A549 (cell line): ENCODE measurements at regions of chr2 and their contacts with region 1.

Region 1: DNA sequence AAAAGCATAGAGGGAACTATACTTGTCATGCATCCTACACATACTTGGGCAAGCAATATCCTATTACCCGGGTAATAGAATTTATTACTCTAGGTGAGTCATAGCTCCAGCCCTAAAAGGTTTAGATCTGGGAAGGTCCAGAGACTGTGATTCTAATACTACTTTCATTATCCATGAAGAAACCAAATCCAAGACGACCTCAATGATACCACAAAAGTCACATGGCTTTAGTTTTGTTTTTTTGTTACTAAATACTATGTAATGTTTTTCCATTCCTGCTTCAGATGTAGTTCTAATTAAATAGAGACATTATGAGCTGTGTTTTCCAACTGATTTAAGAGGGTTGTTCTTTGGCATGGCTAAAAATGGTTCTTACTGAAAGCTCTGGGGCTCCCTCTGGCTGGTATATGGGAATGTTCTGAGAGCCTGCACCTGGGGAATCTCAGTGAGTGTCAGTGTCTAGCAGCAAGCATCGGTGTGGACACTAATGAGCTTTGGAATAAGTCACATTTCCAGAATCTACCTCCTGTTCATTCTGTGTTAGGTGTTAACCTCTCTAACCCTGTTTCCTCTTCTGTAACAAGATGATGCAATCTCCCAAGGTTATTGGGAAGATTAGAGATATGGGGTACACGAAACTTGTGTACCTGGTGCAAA is 20.5 kb upstream of the IL1RL2 start:
- DNase-seq: peak in 1 of 2 experiments; percentile 52
- ATAC-seq: peak; percentile 68 to 78; a peak in 4 of 6 replicates
- H3K4me3 ChIP-seq: no peak overlapping the region
- H3K27ac ChIP-seq: peak overlapping the region; percentile 8 to 49; a peak in 4 of 6 replicates
- H3K4me1 ChIP-seq: peaks cover 11% of the 10 kb centered on the region; the same call in 2 of the 3 replicates
- CTCF ChIP-seq: peak; percentile 66
- EP300 ChIP-seq: no peak
- POLR2A ChIP-seq: no peak
- RAD21 ChIP-seq: peak; percentile 80 to 83

Region 2: DNA sequence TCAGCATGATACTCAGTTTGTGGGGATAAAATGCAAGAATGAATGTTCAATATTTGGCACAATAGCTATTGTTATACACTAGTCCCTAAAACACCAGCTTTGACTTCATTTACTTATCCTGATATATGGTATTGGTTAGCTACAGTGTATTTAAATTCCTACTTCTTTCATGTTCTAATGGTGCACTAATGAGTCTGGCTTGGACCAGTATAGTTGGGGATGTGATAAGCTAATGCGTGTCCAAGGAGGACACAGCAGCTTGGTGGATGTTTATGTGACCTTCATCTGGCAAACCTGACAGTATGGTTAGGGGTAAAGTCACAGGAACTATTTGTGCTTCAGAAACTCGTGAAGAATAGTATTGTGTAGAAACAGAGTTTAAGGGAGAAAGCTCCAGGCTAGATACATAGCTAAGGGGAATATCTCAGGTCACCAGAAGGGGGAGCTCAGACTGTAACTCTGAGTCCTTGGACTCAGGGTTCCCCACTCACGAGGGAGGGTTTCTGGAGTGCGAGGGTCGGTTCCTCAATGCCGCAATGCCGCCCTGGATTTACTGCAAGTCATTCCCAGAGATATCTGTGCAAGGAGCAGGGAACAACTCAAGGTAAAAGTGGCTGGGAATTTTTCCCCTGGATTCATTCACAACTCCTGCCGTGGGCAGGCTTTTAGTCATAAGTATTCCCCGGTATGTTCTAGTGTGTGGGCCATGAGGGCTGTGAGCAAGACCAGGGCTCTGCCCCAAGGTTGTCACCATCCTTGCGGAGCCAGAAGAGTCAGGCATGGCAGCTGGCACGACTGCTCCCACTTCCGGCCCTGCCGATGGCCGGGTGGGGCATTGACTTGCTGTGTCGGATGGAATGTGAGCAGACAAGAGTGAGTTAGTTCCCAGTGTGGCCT is 160.1 kb before region 1 on chr2:
- CTCF ChIA-PET with region 1: interaction called, 13 read pairs
- POLR2A ChIA-PET with region 1: no interaction called
- DNase-seq: peak; percentile 43 to 52
- ATAC-seq: peak; percentile 86 to 98
- H3K4me3 ChIP-seq: no peak overlapping the region
- H3K27ac ChIP-seq: peak overlapping the region in 1 of 2 experiments; percentile 45; a peak in 1 of 6 replicates
- H3K4me1 ChIP-seq: peaks cover 4% of the 10 kb centered on the region; the same call in 1 of the 3 replicates
- CTCF ChIP-seq: peak; percentile 72
- EP300 ChIP-seq: no peak
- POLR2A ChIP-seq: no peak
- RAD21 ChIP-seq: peak; percentile 70 to 71

Region 3: DNA sequence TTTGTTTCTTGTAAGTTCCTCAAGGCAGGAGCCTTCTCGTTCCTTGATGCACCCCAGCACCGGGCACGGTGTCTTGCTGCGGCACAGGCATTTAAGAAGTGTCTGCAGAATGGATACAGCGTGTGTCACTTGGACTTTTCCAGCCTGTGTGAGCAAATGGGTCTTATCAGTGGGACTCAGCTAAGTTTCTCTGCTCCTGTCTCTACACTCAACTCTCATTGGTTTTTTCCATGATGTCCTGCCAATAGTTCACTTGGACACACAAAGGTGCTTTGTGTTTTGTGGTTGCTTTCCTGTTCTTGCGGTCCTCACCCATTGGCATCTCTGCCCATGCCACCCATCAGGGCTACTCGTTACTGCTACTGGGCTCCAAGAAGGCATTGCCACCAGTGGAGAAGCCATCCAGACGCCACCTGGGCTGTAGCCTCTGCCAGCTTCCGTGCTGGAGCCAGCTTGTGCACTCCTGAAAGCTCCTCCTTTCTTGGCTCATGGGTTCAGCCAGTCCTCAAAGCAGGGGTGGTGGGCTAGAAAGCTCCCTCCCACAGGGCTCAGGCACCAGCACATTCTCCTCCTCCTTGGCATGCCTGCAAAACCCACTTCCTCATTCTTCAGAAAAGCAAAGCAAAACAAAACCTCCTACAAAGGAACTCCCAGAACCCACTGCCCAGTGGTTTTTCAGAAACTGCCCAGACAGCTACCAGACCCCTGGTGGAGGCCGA is 133.1 kb before region 1 on chr2:
- CTCF ChIA-PET with region 1: interaction called, 10 read pairs
- POLR2A ChIA-PET with region 1: no interaction called
- DNase-seq: peak in 1 of 2 experiments; percentile 67
- ATAC-seq: peak; percentile 65 to 86
- H3K4me3 ChIP-seq: no peak overlapping the region
- H3K27ac ChIP-seq: peak overlapping the region; percentile 71 to 82
- H3K4me1 ChIP-seq: peaks cover 32% of the 10 kb centered on the region
- CTCF ChIP-seq: no peak
- EP300 ChIP-seq: no peak
- POLR2A ChIP-seq: no peak
- RAD21 ChIP-seq: no peak

Region 4: GRCh38 chr2:102155642-102156491 is 10.4 kb before region 1 on chr2:
- CTCF ChIA-PET with region 1: interaction called, 16 read pairs
- POLR2A ChIA-PET with region 1: no interaction called
- DNase-seq: no peak
- ATAC-seq: no peak
- H3K4me3 ChIP-seq: no peak overlapping the region
- H3K27ac ChIP-seq: peak overlapping the region; percentile 29 to 53; a peak in 4 of 6 replicates
- H3K4me1 ChIP-seq: peaks cover 11% of the 10 kb centered on the region; the same call in 2 of the 3 replicates
- CTCF ChIP-seq: no peak
- EP300 ChIP-seq: no peak
- POLR2A ChIP-seq: no peak
- RAD21 ChIP-seq: no peak